Gastrocnemius medialis (tissue), 4 donors: ENCODE measurements at regions of chr1 and their contacts with region 1.

Region 1: DNA sequence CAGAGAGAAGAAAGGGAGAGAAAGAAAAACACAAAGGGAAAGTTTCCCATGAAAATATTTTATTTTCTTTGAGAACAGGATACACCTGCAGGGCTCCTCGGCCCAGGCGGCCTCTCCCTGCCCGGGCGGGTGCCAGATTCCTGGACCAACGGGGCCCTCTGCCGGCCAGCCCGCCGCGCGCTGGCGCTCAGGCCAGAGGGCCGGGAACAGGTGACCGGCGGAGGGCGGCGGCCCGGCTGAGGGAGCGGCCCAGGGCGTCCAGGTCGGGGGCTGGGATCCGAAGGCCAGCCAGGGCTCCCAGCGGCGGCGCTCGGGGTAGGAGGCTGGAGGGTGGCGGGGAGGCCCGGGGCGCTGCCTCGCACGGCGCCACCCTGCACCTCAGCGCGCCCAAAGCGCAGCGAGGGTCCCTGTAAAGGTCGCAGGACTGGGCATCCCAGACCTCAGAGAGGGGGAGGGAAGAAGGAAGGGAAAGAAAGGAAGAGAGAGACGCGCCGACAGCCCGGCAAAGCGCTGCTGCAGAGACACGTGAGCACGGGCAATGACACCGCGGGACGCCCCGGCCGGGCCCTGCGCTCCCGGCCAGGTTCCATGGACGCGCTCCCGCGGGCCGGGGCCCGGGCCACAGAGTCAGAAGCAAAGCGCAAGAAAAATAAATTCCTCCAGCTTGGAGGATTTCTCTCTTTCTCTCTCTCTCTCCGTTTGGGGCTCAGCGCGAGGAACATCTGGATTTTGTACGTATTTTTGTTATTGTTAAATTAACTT is 927 bp downstream of the WNT9A start:
- DNase-seq: peak; percentile 76 to 86
- ATAC-seq: peak; percentile 48 to 49
- H3K4me3 ChIP-seq: peak overlapping the region; percentile 63 to 80 (median 72)
- H3K27ac ChIP-seq: peak overlapping the region; percentile 91 to 98 (median 97)
- H3K4me1 ChIP-seq: peaks cover 46 to 49% of the 10 kb centered on the region in 2 donors
- H3K27me3 ChIP-seq: no peaks in the 10 kb centered on the region
- CTCF ChIP-seq: peak; percentile 71 to 90 (median 84)
- POLR2A ChIP-seq: peak; percentile 51 to 60

Region 2: GRCh38 chr1:227489572-227489971 is 457.2 kb before region 1 on chr1:
- in situ Hi-C with region 1: loop called in 3 of 4 experiments (anchors 10 to 25 kb)
- intact Hi-C with region 1: no loop called
- DNase-seq: no peak
- ATAC-seq: peak; percentile 33 to 55
- H3K4me3 ChIP-seq: no peak overlapping the region
- H3K27ac ChIP-seq: no peak overlapping the region
- H3K4me1 ChIP-seq: peaks cover 0 to 6% of the 10 kb centered on the region in 2 donors
- H3K27me3 ChIP-seq: no peaks in the 10 kb centered on the region
- CTCF ChIP-seq: no peak
- POLR2A ChIP-seq: no peak

Region 3: GRCh38 chr1:227728059-227728891 is 218.5 kb before region 1 on chr1:
- in situ Hi-C with region 1: no loop called
- intact Hi-C with region 1: loop called (anchors 2 kb)
- DNase-seq: peak; percentile 59 to 80
- ATAC-seq: peak; percentile 71 to 72
- H3K4me3 ChIP-seq: peak overlapping the region; percentile 59 to 79 (median 62)
- H3K27ac ChIP-seq: peak overlapping the region; percentile 79 to 86 (median 83)
- H3K4me1 ChIP-seq: peaks cover 15 to 21% of the 10 kb centered on the region in 2 donors
- H3K27me3 ChIP-seq: no peaks in the 10 kb centered on the region
- CTCF ChIP-seq: peak in 1 of 5 experiments; percentile 13
- POLR2A ChIP-seq: no peak

Region 4: GRCh38 chr1:227778401-227778947 is 168.3 kb before region 1 on chr1:
- in situ Hi-C with region 1: loop called in 1 of 4 experiments (anchors 10 kb)
- intact Hi-C with region 1: no loop called
- DNase-seq: no peak
- ATAC-seq: no peak
- H3K4me3 ChIP-seq: no peak overlapping the region
- H3K27ac ChIP-seq: no peak overlapping the region
- H3K4me1 ChIP-seq: no peaks in the 10 kb centered on the region
- H3K27me3 ChIP-seq: no peaks in the 10 kb centered on the region
- CTCF ChIP-seq: no peak
- POLR2A ChIP-seq: no peak

Region 5: GRCh38 chr1:228082135-228082891 is 135.5 kb after region 1 on chr1 and contains the start of gene ARF1:
- in situ Hi-C with region 1: no loop called
- intact Hi-C with region 1: loop called (anchors 10 kb)
- DNase-seq: peak; percentile 83 to 86
- ATAC-seq: peak; percentile 75 to 76
- H3K4me3 ChIP-seq: peak within 1 kb of the TSS; percentile 70 to 94 (median 93)
- H3K27ac ChIP-seq: peak within 1 kb of the TSS; percentile 89 to 96 (median 92)
- H3K4me1 ChIP-seq: peaks cover 41 to 47% of the 10 kb centered on the region in 2 donors
- H3K27me3 ChIP-seq: no peaks in the 10 kb centered on the region
- CTCF ChIP-seq: peak in 2 of 5 experiments; percentile 14 to 42
- POLR2A ChIP-seq: peak; percentile 94 to 97
- total RNA-seq, gene ARF1: 234 to 422 (median 306) TPM